Psoas muscle (tissue), 8 donors: ENCODE measurements at regions of chr4 and their contacts with region 1.

Region 1: GRCh38 chr4:155442267-155443105 is 65.7 kb upstream of the MAP9 start:
- DNase-seq: peak; percentile 70 to 82
- ATAC-seq: peak in 3 of 4 donors; percentile 59 to 71 (median 61)
- H3K4me3 ChIP-seq: peak overlapping the region; percentile 42
- H3K27ac ChIP-seq: no peak overlapping the region
- H3K4me1 ChIP-seq: no peaks in the 10 kb centered on the region
- H3K27me3 ChIP-seq: no peaks in the 10 kb centered on the region
- CTCF ChIP-seq: peak; percentile 75

Region 2: DNA sequence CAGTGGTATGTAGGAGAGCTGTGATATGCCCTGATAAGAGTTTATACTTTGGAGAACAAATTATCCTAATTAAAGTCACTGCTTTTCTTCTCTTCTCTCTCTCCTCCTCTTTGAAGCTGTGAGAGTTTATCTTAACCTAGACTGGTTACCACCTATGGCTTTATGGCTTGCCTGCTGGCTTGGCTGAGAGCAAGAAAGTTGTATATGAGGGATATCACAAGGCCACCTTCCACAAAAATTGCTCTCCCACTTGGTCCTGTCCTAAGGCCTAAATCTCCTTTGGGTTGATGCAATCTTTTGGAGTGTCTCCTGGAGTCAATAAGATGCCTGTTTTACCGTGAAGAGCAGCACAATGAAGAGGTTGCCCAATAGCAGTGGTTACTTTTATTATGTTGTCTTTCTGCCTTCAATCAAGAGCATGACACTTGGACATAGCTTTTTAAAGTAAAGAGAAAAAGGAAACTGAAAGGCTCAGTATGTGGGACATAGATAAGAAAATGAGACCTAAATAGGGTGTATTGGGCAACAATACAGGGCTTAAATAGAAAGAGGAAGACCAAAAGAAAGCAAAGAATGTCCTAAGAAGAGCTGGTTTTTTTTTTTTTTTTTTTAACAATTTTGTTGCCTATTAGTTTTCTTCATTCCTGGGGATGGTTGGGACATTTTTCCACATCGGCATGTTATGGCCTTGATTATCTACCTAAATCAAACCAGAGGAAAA is 233.4 kb after region 1 on chr4:
- intact Hi-C with region 1: loop called in 1 of 2 experiments (anchors 10 kb)
- DNase-seq: no peak
- ATAC-seq: peak in 1 of 4 donors; percentile 23
- H3K4me3 ChIP-seq: no peak overlapping the region
- H3K27ac ChIP-seq: no peak overlapping the region
- H3K4me1 ChIP-seq: no peaks in the 10 kb centered on the region
- H3K27me3 ChIP-seq: no peaks in the 10 kb centered on the region
- CTCF ChIP-seq: no peak

Region 3: GRCh38 chr4:155787113-155787710 is 344.7 kb after region 1 on chr4:
- intact Hi-C with region 1: loop called in 1 of 2 experiments (anchors 2 kb)
- DNase-seq: no peak
- ATAC-seq: peak in 2 of 4 donors; percentile 51
- H3K4me3 ChIP-seq: no peak overlapping the region
- H3K27ac ChIP-seq: no peak overlapping the region
- H3K4me1 ChIP-seq: no peaks in the 10 kb centered on the region
- H3K27me3 ChIP-seq: no peaks in the 10 kb centered on the region
- CTCF ChIP-seq: peak; percentile 50